Motor neuron (in vitro differentiated cells): ENCODE measurements at regions of chr10 and their contacts with region 1.

Region 1: DNA sequence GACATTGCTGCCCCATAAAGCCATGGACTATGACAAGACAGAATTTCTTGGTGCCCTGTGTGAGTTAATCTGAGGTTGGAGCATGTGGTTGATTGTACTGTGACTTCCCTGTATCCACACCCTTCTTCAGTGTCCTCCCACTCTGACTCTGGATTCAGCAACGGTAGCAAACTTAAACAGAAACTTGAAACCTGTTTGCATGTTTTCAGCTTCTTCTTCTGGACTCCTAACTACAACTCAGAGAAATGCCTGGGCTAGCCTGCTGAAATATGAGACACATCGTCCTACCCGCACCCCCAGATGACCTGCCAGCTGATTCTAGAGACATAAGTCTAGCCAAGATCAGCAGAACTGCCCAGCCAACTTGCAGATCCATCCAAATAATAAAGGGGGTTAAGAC is 78.4 kb downstream of the IPMK start:
- ATAC-seq: peak in 3 of 8 experiments; percentile 86 to 99 (median 99)
- H3K4me3 ChIP-seq: no peak overlapping the region
- H3K27ac ChIP-seq: no peak overlapping the region
- H3K4me1 ChIP-seq: no peaks in the 10 kb centered on the region

Region 2: DNA sequence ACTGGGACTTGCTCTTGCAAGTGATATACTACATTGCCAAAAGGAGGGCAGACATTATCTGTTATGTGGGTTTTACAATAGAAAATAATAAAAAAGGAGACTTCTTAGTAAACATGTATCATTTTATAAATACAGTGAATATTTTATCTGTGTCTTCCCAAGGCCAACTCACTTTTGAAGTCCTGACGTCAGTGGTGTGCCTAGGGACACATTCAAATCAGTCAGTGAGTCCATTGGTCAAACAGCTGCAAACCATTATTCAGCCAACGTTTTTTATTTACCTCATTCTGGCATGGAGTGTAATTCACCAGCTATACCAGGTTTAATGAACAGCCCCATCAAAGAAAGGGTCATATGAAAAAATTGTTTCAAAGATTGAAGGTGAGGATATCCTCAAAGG is 185.3 kb before region 1 on chr10:
- in situ Hi-C with region 1: no loop called
- ATAC-seq: peak in 1 of 8 experiments; percentile 23
- H3K4me3 ChIP-seq: no peak overlapping the region
- H3K27ac ChIP-seq: no peak overlapping the region
- H3K4me1 ChIP-seq: peaks cover 2 to 3% of the 10 kb centered on the region in 2 donors

Region 3: GRCh38 chr10:58291538-58292174 is 102.4 kb after region 1 on chr10:
- in situ Hi-C with region 1: loop called in 3 of 9 experiments (anchors 5 to 25 kb)
- ATAC-seq: peak in 4 of 8 experiments; percentile 29 to 86 (median 56)
- H3K4me3 ChIP-seq: no peak overlapping the region
- H3K27ac ChIP-seq: no peak overlapping the region
- H3K4me1 ChIP-seq: no peaks in the 10 kb centered on the region

Region 4: GRCh38 chr10:58384999-58385783 is 195.9 kb after region 1 on chr10 and contains the start of gene TFAM:
- in situ Hi-C with region 1: no loop called
- ATAC-seq: peak; percentile 92 to 98 (median 96)
- H3K4me3 ChIP-seq: peak within 1 kb of the TSS; percentile 50 to 80 (median 67)
- H3K27ac ChIP-seq: peak within 1 kb of the TSS; percentile 74 to 79
- H3K4me1 ChIP-seq: peaks cover 12 to 16% of the 10 kb centered on the region in 2 donors
- total RNA-seq, gene TFAM: 26.1 to 64.8 (median 30.7) TPM